ENCODE measurements at regions of chr1 and their contacts with region 1.

Region 1: DNA sequence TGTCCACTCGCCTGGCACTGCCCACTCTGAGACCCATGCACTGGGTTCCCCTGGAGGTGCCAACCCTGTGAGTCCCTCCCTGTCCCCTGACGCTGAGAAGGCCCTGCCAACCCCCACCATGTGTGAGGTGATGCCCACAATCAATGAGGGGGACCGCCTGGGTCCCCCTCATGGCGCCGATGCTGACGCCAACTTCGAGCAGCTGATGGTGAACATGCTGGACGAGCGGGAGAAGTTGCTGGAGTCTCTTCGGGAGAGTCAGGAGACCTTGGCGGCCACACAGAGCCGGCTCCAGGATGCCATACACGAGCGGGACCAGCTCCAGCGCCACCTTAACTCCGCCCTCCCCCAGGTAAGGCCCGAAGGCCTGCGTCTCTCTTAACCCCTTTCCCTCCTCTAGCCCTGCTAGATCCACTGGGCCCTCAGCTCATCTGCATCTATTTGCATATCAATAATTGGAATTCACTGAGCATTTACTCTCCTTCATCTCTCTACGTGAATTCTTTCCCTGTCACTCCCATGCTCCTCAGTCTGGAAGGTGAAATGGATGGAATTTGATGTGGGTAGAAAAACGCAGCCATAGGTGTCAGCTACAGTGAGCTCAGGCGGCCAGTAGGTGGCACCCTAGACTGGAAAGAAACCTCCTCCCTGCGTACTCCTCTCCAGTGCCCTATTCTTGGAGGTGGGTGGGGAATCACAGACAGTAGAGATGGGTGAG is 12.8 kb downstream of the PPFIA4 start:
- DNase-seq: peak; percentile 77
- ATAC-seq: peak; percentile 80
- H3K4me3 Mint-ChIP-seq: no peak overlapping the region
- H3K27ac Mint-ChIP-seq: no peak overlapping the region
- H3K4me1 Mint-ChIP-seq: peaks cover 10% of the 10 kb centered on the region
- H3K27me3 Mint-ChIP-seq: no peaks in the 10 kb centered on the region

Region 2: GRCh38 chr1:202901555-202901954 is 137.5 kb before region 1 on chr1:
- CTCF ChIA-PET with region 1: no interaction called
- POLR2A ChIA-PET with region 1: no interaction called
- DNase-seq: no peak
- ATAC-seq: no peak
- H3K4me3 Mint-ChIP-seq: no peak overlapping the region
- H3K27ac Mint-ChIP-seq: no peak overlapping the region
- H3K4me1 Mint-ChIP-seq: no peaks in the 10 kb centered on the region
- H3K27me3 Mint-ChIP-seq: no peaks in the 10 kb centered on the region

Region 3: DNA sequence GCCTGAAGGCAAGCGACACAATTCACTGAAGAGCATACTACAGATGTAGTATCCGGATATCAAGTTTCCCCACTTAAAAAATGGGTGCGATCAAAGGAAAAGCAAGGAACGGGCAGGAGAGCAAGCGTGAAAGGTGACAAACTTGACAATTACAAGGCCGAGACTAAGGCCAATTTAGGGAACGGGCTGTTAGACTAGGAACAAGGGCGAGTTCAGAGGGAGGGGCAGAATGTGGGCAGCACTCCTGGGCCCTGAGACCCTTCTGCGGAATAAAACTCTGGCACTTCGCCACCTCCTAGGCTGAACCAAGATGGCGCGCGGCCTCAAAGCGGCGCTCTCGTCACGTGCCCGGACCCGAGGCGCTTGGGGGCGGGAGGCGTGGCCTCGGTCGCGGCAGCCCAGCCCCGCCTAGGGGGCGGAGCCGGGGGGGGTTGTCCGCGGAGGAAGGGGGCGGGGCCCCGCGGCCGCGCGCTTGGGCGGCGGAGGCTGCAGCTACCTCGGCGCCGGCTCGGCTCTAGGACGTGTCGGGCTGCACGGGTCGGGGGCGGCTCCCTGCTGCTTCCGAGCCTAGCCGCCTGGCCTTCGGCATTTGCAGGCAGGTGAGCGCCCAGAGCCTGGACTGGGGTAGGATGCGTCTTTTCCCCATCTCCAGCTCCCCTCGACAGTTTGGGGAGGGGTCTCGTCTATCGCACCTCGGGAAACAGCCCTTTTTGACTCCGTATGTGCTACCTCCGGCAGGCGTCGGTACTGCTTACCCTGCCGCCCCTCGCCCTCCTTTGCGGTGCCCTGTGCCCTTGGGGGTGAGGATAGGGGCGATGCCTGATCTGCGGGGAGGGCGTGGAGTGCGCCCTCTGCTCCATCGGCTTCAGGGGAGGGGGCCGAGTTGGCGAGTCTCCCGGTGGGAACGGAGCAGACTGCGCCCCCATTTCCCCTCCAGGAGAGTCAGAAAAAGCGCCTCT is 12.7 kb before region 1 on chr1 and contains the start of gene PPFIA4:
- CTCF ChIA-PET with region 1: interaction called, 76 read pairs
- POLR2A ChIA-PET with region 1: interaction called, 4 read pairs
- DNase-seq: peak; percentile 90
- ATAC-seq: peak; percentile 94
- H3K4me3 Mint-ChIP-seq: peak within 1 kb of the TSS; percentile 73
- H3K27ac Mint-ChIP-seq: peak within 1 kb of the TSS; percentile 70
- H3K4me1 Mint-ChIP-seq: peaks cover 21% of the 10 kb centered on the region
- H3K27me3 Mint-ChIP-seq: peaks cover 8% of the 10 kb centered on the region
- total RNA-seq, gene PPFIA4: 31.9 to 32.0 TPM

Region 4: DNA sequence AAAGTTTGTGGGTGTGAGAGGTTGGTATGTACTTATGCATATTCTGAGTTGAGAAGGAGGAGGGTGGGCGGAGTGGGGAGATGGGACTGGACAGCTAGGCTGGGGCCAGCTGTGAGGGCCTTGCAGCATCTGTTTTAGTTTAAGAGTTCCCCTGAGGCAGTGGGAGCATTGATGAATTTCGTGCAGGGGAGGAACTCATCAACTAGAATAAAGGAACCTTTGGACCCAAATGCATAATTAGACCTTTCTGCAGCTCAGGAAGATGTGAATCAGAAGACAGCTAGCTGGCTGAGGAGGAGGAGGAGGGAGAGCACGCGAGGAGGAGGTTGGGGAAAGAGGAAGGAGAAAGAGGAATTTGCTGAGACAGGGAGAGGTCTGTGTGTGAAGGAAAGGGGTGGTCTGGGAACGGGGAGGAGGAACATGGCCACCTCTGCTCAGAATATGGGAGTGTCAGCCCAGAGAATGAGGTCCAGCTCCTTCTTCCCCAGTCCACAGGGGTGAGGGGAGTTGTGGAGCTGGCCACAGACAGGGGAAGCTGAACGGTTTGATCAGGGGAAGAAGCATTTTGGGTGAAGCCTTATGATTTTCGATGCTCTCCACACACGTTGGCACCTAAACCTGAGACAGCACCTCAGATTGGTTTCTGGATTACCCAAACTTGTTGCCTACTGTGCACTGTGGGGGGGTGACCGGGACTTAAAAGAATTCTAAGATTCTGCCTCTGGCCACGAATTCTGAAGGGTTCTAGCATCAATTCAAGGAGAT is 19.0 kb after region 1 on chr1:
- CTCF ChIA-PET with region 1: interaction called, 36 read pairs
- POLR2A ChIA-PET with region 1: no interaction called
- DNase-seq: no peak
- ATAC-seq: no peak
- H3K4me3 Mint-ChIP-seq: no peak overlapping the region
- H3K27ac Mint-ChIP-seq: no peak overlapping the region
- H3K4me1 Mint-ChIP-seq: no peaks in the 10 kb centered on the region
- H3K27me3 Mint-ChIP-seq: no peaks in the 10 kb centered on the region

Region 5: DNA sequence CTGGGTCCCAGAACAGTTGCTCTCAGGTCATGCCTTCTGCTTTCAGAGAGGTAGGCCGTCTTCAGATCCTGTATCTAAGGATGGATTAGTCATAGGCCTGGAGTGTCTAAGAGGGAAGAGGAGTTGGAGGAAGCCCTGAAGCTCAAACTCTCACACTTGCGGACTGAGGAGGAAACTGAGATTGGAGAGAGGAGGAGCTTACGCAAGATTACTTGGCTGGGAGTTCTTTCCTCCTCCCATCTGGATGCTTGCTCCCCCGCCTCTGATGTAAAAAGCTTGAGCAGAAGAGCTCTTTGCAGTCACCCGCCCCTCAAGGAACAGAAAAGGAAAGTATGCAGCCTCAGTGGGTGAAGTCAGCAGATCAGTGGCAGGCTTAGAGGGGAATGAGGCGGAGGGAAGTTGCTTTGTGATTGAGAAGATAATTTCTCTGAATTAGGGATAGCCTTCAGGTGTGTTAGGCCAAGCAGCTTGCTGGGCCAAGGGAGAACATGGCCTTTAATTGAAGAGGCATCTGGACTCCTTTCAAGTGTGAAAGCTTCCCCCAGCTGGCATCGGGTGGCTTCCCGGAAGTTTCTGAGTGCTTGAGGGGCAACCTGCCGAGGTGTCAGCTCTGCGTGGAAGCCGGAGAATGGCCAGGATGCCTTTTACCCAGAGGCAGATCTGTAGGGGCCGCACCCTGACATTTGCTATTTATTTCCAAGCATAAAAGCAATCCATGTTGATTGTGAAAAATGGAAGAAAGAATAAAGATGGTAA is 95.1 kb after region 1 on chr1:
- CTCF ChIA-PET with region 1: no interaction called
- POLR2A ChIA-PET with region 1: no interaction called
- DNase-seq: no peak
- ATAC-seq: no peak
- H3K4me3 Mint-ChIP-seq: no peak overlapping the region
- H3K27ac Mint-ChIP-seq: no peak overlapping the region
- H3K4me1 Mint-ChIP-seq: peaks cover 11% of the 10 kb centered on the region
- H3K27me3 Mint-ChIP-seq: peaks cover 22% of the 10 kb centered on the region

Region 6: GRCh38 chr1:203172128-203173010 is 133.3 kb after region 1 on chr1:
- CTCF ChIA-PET with region 1: interaction called, 54 read pairs
- POLR2A ChIA-PET with region 1: no interaction called
- DNase-seq: peak; percentile 65
- ATAC-seq: peak; percentile 74
- H3K4me3 Mint-ChIP-seq: no peak overlapping the region
- H3K27ac Mint-ChIP-seq: no peak overlapping the region
- H3K4me1 Mint-ChIP-seq: no peaks in the 10 kb centered on the region
- H3K27me3 Mint-ChIP-seq: no peaks in the 10 kb centered on the region

Region 7: GRCh38 chr1:203216274-203217138 is 177.5 kb after region 1 on chr1:
- CTCF ChIA-PET with region 1: interaction called, 116 read pairs
- POLR2A ChIA-PET with region 1: no interaction called
- DNase-seq: peak; percentile 70
- ATAC-seq: peak; percentile 75
- H3K4me3 Mint-ChIP-seq: no peak overlapping the region
- H3K27ac Mint-ChIP-seq: no peak overlapping the region
- H3K4me1 Mint-ChIP-seq: no peaks in the 10 kb centered on the region
- H3K27me3 Mint-ChIP-seq: peaks cover 5% of the 10 kb centered on the region